ENCODE measurements at regions of chr2 and their contacts with region 1.

Region 1: DNA sequence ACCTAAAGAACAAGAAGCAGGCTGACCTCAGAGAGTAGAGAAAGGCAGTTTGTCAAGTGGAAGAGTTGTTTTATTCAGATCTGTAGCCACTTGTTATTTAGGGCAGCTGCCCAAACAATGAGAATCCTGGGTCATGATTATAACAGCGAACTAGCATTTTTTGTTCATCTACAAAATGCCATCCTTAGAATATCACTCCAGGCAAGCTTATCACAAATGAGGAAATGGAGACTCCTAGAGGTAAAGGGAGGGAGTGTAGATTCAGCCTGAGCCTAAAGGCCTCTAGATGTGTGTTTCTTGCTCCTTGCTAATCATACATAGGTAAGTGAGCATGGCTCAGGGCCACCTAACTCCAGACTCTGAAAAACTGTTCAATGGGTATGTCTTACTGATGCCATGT is 126.1 kb downstream of the HNMT start:
- DNase-seq: no peak
- H3K4me3 ChIP-seq: no peak overlapping the region
- H3K27ac ChIP-seq: no peak overlapping the region
- H3K4me1 ChIP-seq: peaks cover 13% of the 10 kb centered on the region
- H3K27me3 ChIP-seq: no peaks in the 10 kb centered on the region
- CTCF ChIP-seq: peak; percentile 68

Region 2: DNA sequence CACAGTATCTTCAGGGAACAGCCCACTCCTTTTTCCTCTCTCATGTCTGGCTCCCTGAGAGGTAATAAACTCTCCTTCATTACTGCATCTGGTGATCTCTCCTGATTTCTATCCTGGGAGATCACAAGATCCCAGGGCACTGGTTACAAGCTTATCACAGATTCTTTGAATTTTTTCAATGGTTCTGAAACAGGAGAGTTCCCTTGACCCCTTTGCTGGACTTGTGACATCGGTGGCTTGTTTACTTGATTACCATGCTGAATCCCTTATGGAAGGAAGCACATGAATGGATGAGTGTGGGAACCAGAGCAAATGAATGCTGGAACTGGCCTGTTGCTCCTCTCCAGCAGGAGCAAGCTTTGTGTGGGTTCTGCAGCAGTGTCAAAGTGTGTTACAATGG is 193.2 kb before region 1 on chr2:
- CTCF ChIA-PET with region 1: no interaction called
- POLR2A ChIA-PET with region 1: no interaction called
- intact Hi-C with region 1: no loop called
- DNase-seq: no peak
- H3K4me3 ChIP-seq: no peak overlapping the region
- H3K27ac ChIP-seq: no peak overlapping the region
- H3K4me1 ChIP-seq: no peaks in the 10 kb centered on the region
- H3K27me3 ChIP-seq: no peaks in the 10 kb centered on the region
- CTCF ChIP-seq: no peak

Region 3: DNA sequence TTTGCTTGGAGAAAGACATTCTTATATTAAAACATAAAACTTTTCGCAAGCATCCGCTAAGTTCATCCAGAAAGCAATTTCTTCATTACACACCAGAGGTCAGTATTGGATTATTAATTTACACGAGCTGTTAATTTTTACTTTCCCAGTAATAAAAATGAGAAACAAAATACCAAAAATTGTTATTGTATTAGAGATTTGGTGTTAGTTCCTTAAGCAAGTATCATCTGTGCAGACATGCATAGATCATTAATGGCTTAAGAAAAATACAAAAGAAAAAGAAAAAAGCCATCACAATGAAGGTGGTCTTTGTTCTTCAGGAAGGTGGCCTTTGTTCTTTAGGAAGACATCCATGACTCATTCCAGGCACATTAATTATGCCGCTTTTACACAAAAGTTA is 179.7 kb before region 1 on chr2:
- CTCF ChIA-PET with region 1: interaction called, 6 read pairs
- POLR2A ChIA-PET with region 1: no interaction called
- intact Hi-C with region 1: loop called (anchors 1 kb)
- DNase-seq: no peak
- H3K4me3 ChIP-seq: no peak overlapping the region
- H3K27ac ChIP-seq: no peak overlapping the region
- H3K4me1 ChIP-seq: no peaks in the 10 kb centered on the region
- H3K27me3 ChIP-seq: no peaks in the 10 kb centered on the region
- CTCF ChIP-seq: peak; percentile 81

Region 4: DNA sequence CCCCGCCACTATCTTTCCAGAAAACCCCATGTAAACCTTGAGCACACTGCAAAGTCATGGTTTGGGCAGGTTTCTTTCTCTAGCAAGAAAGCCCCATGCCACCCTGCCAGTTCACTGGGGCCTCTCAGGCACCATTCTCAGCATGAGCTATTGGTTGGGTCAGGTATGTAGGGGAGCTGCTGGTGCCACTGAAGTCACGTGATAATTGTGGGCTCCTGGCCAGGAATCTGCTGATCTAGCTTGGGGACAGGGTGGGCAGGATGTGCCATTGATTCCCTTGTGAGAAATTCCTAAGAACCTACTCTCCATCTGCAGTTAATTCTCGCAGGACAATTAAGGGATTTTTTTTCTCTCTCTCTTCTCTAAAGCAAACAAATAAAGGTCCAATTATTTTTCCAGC is 152.6 kb before region 1 on chr2:
- CTCF ChIA-PET with region 1: no interaction called
- POLR2A ChIA-PET with region 1: no interaction called
- intact Hi-C with region 1: no loop called
- DNase-seq: no peak
- H3K4me3 ChIP-seq: no peak overlapping the region
- H3K27ac ChIP-seq: no peak overlapping the region
- H3K4me1 ChIP-seq: no peaks in the 10 kb centered on the region
- H3K27me3 ChIP-seq: no peaks in the 10 kb centered on the region
- CTCF ChIP-seq: no peak

Region 5: GRCh38 chr2:137947728-137948336 is 142.5 kb before region 1 on chr2:
- CTCF ChIA-PET with region 1: no interaction called
- POLR2A ChIA-PET with region 1: no interaction called
- intact Hi-C with region 1: loop called (anchors 1 kb)
- DNase-seq: peak; percentile 51 to 59
- H3K4me3 ChIP-seq: no peak overlapping the region
- H3K27ac ChIP-seq: no peak overlapping the region
- H3K4me1 ChIP-seq: peaks cover 1% of the 10 kb centered on the region; the same call in 1 of the 2 replicates
- H3K27me3 ChIP-seq: no peaks in the 10 kb centered on the region
- CTCF ChIP-seq: peak; percentile 81

Region 6: GRCh38 chr2:138207074-138207930 is 117.0 kb after region 1 on chr2:
- CTCF ChIA-PET with region 1: no interaction called
- POLR2A ChIA-PET with region 1: interaction called, 10 read pairs
- intact Hi-C with region 1: no loop called
- DNase-seq: no peak
- H3K4me3 ChIP-seq: no peak overlapping the region
- H3K27ac ChIP-seq: no peak overlapping the region
- H3K4me1 ChIP-seq: no peaks in the 10 kb centered on the region
- H3K27me3 ChIP-seq: no peaks in the 10 kb centered on the region
- CTCF ChIP-seq: no peak

Region 7: GRCh38 chr2:138741851-138742250 is 651.5 kb after region 1 on chr2:
- CTCF ChIA-PET with region 1: no interaction called
- POLR2A ChIA-PET with region 1: no interaction called
- intact Hi-C with region 1: no loop called
- DNase-seq: no peak
- H3K4me3 ChIP-seq: no peak overlapping the region
- H3K27ac ChIP-seq: no peak overlapping the region
- H3K4me1 ChIP-seq: no peaks in the 10 kb centered on the region
- H3K27me3 ChIP-seq: no peaks in the 10 kb centered on the region
- CTCF ChIP-seq: no peak

Measured in PC-9 (cell line).